T-cell (primary cell): ENCODE measurements at regions of chr14 and their contacts with region 1.

Region 1: GRCh38 chr14:87944987-87945604 is 47.9 kb downstream of the GALC start:
- DNase-seq: peak in 2 of 35 experiments; percentile 9 to 81
- ATAC-seq: peak in 1 of 4 experiments; percentile 61
- H3K4me3 ChIP-seq: no peak overlapping the region
- H3K4me3 Mint-ChIP-seq: no peak overlapping the region
- H3K27ac ChIP-seq: no peak overlapping the region
- H3K27ac Mint-ChIP-seq: no peak overlapping the region
- H3K4me1 ChIP-seq: no peaks in the 10 kb centered on the region
- H3K4me1 Mint-ChIP-seq: peaks cover 6 to 16% (median 7%) of the 10 kb centered on the region in 3 donors
- H3K27me3 ChIP-seq: no peaks in the 10 kb centered on the region
- H3K27me3 Mint-ChIP-seq: no peaks in the 10 kb centered on the region

Region 2: DNA sequence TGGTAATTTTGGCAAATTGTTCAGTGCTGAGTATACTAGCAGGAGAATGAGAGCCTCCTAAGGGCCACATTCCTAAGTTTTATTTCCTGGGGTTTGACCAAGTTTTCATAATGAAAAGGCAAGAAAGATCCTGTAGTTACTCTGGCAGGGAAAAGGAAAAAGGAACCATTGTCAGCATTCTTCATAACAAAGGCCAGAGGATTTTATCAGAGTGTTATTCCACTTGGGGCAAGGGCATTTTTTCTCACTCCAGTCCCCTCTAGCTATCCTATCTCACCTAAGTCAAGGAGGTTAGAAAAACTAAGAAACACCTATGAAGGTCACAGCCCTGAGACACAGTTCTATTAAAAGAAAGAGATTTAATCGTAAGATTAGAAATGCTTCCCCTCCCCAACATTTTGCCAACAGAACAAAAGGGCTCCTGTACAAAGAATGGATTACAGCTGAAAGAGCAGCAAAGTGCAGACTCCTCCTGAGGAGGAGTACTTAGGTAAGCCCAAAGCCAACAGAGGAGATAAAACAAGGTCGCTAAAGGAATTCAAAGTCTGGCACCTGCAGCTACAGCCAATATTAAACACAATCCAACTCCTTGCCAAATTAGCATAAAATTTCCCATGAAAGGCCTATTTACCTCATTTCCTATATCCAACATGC is 114.5 kb before region 1 on chr14:
- CTCF ChIA-PET with region 1: no interaction called
- POLR2A ChIA-PET with region 1: no interaction called
- DNase-seq: no peak
- ATAC-seq: no peak
- H3K4me3 ChIP-seq: no peak overlapping the region
- H3K4me3 Mint-ChIP-seq: no peak overlapping the region
- H3K27ac ChIP-seq: no peak overlapping the region
- H3K27ac Mint-ChIP-seq: no peak overlapping the region
- H3K4me1 ChIP-seq: no peaks in the 10 kb centered on the region
- H3K4me1 Mint-ChIP-seq: no peaks in the 10 kb centered on the region
- H3K27me3 ChIP-seq: no peaks in the 10 kb centered on the region
- H3K27me3 Mint-ChIP-seq: peaks cover 17 to 22% of the 10 kb centered on the region in 2 donors

Region 3: DNA sequence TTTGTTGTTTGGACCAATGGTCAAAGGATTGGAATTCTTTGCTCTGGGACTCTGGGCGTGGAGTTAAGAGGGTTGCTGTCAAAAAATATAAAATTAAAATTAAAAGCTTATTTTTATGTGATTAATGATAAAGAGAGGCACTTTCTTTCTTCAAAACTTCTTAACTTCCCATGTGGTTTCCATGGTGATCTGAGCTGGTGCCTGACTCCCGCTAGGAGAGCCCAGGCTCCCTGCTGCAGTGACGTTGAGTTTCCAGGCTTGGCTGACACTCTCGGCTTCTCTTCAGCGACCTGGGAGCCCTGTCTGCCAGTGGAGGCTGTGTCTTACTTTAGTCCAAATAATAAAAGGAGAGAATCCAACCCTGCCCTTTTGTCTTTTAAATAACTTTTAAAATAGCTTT is 36.5 kb before region 1 on chr14:
- CTCF ChIA-PET with region 1: no interaction called
- POLR2A ChIA-PET with region 1: no interaction called
- DNase-seq: no peak
- ATAC-seq: no peak
- H3K4me3 ChIP-seq: no peak overlapping the region
- H3K4me3 Mint-ChIP-seq: no peak overlapping the region
- H3K27ac ChIP-seq: no peak overlapping the region
- H3K27ac Mint-ChIP-seq: no peak overlapping the region
- H3K4me1 ChIP-seq: no peaks in the 10 kb centered on the region
- H3K4me1 Mint-ChIP-seq: no peaks in the 10 kb centered on the region
- H3K27me3 ChIP-seq: peaks cover 0 to 18% of the 10 kb centered on the region in 2 experiments
- H3K27me3 Mint-ChIP-seq: peaks cover 18 to 23% of the 10 kb centered on the region in 2 donors

Region 4: GRCh38 chr14:87934185-87934584 is 10.9 kb before region 1 on chr14:
- CTCF ChIA-PET with region 1: interaction called, 4 to 14 read pairs
- POLR2A ChIA-PET with region 1: no interaction called
- DNase-seq: no peak
- ATAC-seq: no peak
- H3K4me3 ChIP-seq: no peak overlapping the region
- H3K4me3 Mint-ChIP-seq: no peak overlapping the region
- H3K27ac ChIP-seq: no peak overlapping the region
- H3K27ac Mint-ChIP-seq: no peak overlapping the region
- H3K4me1 ChIP-seq: no peaks in the 10 kb centered on the region
- H3K4me1 Mint-ChIP-seq: peaks cover 0 to 13% (median 2%) of the 10 kb centered on the region in 3 donors
- H3K27me3 ChIP-seq: no peaks in the 10 kb centered on the region
- H3K27me3 Mint-ChIP-seq: no peaks in the 10 kb centered on the region

Region 5: GRCh38 chr14:87992718-87993628 is 47.9 kb after region 1 on chr14 and contains the start of gene GALC:
- CTCF ChIA-PET with region 1: interaction called, 3 to 14 read pairs
- POLR2A ChIA-PET with region 1: no interaction called
- DNase-seq: peak; percentile 92 to 97 (median 95)
- ATAC-seq: peak; percentile 88 to 90 (median 89)
- H3K4me3 ChIP-seq: peak within 1 kb of the TSS; percentile 66 to 86
- H3K4me3 Mint-ChIP-seq: peak within 1 kb of the TSS; percentile 86 to 93 (median 88)
- H3K27ac ChIP-seq: peak within 1 kb of the TSS; percentile 98
- H3K27ac Mint-ChIP-seq: peak within 1 kb of the TSS; percentile 98 to 99
- H3K4me1 ChIP-seq: peaks cover 7 to 31% of the 10 kb centered on the region in 2 experiments
- H3K4me1 Mint-ChIP-seq: peaks cover 75 to 78% (median 75%) of the 10 kb centered on the region in 3 donors
- H3K27me3 ChIP-seq: no peaks in the 10 kb centered on the region
- H3K27me3 Mint-ChIP-seq: no peaks in the 10 kb centered on the region
- total RNA-seq, gene GALC: 17.2 to 20.5 (median 18.6) TPM

Region 6: GRCh38 chr14:88005978-88006851 is 61.1 kb after region 1 on chr14:
- CTCF ChIA-PET with region 1: interaction called in 1 of 2 experiments, 13 read pairs
- POLR2A ChIA-PET with region 1: no interaction called
- DNase-seq: peak in 34 of 35 experiments; percentile 31 to 90 (median 70)
- ATAC-seq: peak; percentile 90 to 96 (median 96)
- H3K4me3 ChIP-seq: peak overlapping the region; percentile 74 to 84
- H3K4me3 Mint-ChIP-seq: peak overlapping the region; percentile 80 to 87 (median 83)
- H3K27ac ChIP-seq: peak overlapping the region; percentile 96
- H3K27ac Mint-ChIP-seq: peak overlapping the region; percentile 96 to 97
- H3K4me1 ChIP-seq: peaks cover 28 to 69% of the 10 kb centered on the region in 2 experiments
- H3K4me1 Mint-ChIP-seq: peaks cover 69 to 72% (median 71%) of the 10 kb centered on the region in 3 donors
- H3K27me3 ChIP-seq: no peaks in the 10 kb centered on the region
- H3K27me3 Mint-ChIP-seq: no peaks in the 10 kb centered on the region

Region 7: GRCh38 chr14:88013750-88014349 is 68.8 kb after region 1 on chr14:
- CTCF ChIA-PET with region 1: interaction called, 3 to 16 read pairs
- POLR2A ChIA-PET with region 1: no interaction called
- DNase-seq: peak in 22 of 35 experiments; percentile 11 to 65 (median 31)
- ATAC-seq: peak in 2 of 4 experiments; percentile 61
- H3K4me3 ChIP-seq: no peak overlapping the region
- H3K4me3 Mint-ChIP-seq: peak overlapping the region in 1 of 3 donors; percentile 28
- H3K27ac ChIP-seq: peak overlapping the region; percentile 27
- H3K27ac Mint-ChIP-seq: peak overlapping the region; percentile 45 to 57
- H3K4me1 ChIP-seq: peaks cover 21 to 32% of the 10 kb centered on the region in 2 experiments
- H3K4me1 Mint-ChIP-seq: peaks cover 49 to 81% (median 77%) of the 10 kb centered on the region in 3 donors
- H3K27me3 ChIP-seq: no peaks in the 10 kb centered on the region
- H3K27me3 Mint-ChIP-seq: no peaks in the 10 kb centered on the region

Region 8: GRCh38 chr14:88089445-88089844 is 144.3 kb after region 1 on chr14:
- CTCF ChIA-PET with region 1: no interaction called
- POLR2A ChIA-PET with region 1: no interaction called
- DNase-seq: no peak
- ATAC-seq: no peak
- H3K4me3 ChIP-seq: no peak overlapping the region
- H3K4me3 Mint-ChIP-seq: no peak overlapping the region
- H3K27ac ChIP-seq: no peak overlapping the region
- H3K27ac Mint-ChIP-seq: no peak overlapping the region
- H3K4me1 ChIP-seq: no peaks in the 10 kb centered on the region
- H3K4me1 Mint-ChIP-seq: no peaks in the 10 kb centered on the region
- H3K27me3 ChIP-seq: no peaks in the 10 kb centered on the region
- H3K27me3 Mint-ChIP-seq: no peaks in the 10 kb centered on the region

Region 9: DNA sequence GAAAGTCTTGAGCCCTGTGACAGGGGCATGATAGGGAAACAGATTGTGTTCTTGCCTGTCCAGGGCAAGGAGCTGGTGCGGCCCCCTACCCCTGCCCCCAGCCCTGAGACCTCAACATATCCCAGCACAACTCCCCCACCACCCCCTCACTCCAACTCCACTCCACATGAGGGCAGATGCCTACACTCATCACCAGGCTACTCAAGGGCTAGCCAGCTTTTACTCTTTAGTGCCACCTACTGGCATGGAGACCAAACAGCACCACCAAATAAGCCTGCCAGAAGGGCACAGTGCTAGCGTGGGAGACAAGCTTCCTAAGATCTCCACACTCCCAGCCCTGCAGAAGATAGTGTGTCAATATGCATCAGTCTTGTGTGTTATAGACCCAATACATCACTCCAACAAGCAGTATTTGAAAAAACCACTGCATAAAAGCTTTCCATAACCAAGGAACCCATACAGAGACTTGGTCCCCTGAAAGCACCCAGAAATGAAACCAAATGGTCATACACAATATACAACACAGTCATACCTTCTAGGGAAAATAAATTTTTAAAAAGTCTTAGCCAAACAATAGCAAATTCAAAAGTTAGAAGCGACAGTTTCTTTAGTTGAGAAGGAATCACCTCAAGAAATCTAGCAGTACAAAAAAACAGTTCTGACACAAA is 223.5 kb after region 1 on chr14:
- CTCF ChIA-PET with region 1: interaction called, 38 to 59 read pairs
- POLR2A ChIA-PET with region 1: interaction called in 1 of 2 experiments, 3 read pairs
- DNase-seq: peak; percentile 3 to 80 (median 46)
- ATAC-seq: peak; percentile 80 to 94 (median 88)
- H3K4me3 ChIP-seq: no peak overlapping the region
- H3K4me3 Mint-ChIP-seq: no peak overlapping the region
- H3K27ac ChIP-seq: no peak overlapping the region
- H3K27ac Mint-ChIP-seq: no peak overlapping the region
- H3K4me1 ChIP-seq: peaks cover 0 to 17% of the 10 kb centered on the region in 2 experiments
- H3K4me1 Mint-ChIP-seq: peaks cover 11 to 24% (median 13%) of the 10 kb centered on the region in 3 donors
- H3K27me3 ChIP-seq: peaks cover 0 to 10% of the 10 kb centered on the region in 2 experiments
- H3K27me3 Mint-ChIP-seq: peaks cover 9 to 21% of the 10 kb centered on the region in 2 donors

Region 10: DNA sequence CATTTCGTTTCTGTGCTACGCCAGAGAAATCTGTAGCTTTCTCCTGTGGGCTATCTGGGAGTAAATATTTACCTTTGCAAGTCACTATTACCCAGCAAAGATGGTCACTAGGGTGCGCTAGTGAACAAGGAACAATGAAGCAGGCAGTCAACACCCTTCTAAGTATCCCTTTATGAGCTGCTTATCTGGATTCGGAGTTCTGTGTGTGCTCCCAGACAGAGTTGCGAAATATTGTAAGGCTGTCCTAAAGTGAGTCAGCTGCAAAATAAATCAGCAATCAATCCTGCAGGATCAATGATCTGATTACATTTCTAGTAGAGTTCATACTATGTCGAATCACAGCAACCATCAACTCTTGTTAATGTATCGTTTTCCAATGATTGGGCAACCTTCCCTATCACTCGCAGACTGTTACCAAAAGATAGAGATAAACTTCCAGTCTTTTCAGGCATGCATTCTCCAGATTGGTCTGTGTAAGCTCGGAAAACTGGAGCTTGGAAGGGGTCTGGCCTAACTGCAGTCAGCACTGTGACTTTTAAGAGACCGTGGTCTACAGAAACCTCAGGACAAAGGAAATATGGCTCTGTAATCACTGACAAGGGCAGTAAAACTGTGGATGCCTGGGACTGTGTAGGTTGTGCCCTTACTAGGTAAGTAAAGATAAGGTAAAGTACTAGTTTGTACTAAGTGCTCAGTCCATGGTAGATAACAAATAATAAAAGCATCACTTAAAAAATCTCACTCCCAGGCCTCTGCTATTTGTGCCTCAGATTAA is 244.5 kb after region 1 on chr14:
- CTCF ChIA-PET with region 1: interaction called in 1 of 2 experiments, 17 read pairs
- POLR2A ChIA-PET with region 1: no interaction called
- DNase-seq: peak in 28 of 35 experiments; percentile 1 to 67 (median 31)
- ATAC-seq: peak in 3 of 4 experiments; percentile 36 to 61 (median 51)
- H3K4me3 ChIP-seq: no peak overlapping the region
- H3K4me3 Mint-ChIP-seq: peak overlapping the region; percentile 1 to 46 (median 13)
- H3K27ac ChIP-seq: no peak overlapping the region
- H3K27ac Mint-ChIP-seq: no peak overlapping the region
- H3K4me1 ChIP-seq: peaks cover 0 to 5% of the 10 kb centered on the region in 2 experiments
- H3K4me1 Mint-ChIP-seq: peaks cover 5 to 6% (median 6%) of the 10 kb centered on the region in 3 donors
- H3K27me3 ChIP-seq: peaks cover 0 to 4% of the 10 kb centered on the region in 2 experiments
- H3K27me3 Mint-ChIP-seq: peaks cover 17 to 30% of the 10 kb centered on the region in 2 donors